Activated naive CD4-positive, alpha-beta T cell treated with anti-CD3 and anti-CD28 coated beads for 36 hours (primary cell): ENCODE measurements at regions of chr12 and their contacts with region 1.

Region 1: GRCh38 chr12:102958073-102958829 is 777 bp downstream of the ASCL1 start:
- DNase-seq: no peak
- H3K4me3 Mint-ChIP-seq: peak overlapping the region; percentile 66
- H3K27ac Mint-ChIP-seq: no peak overlapping the region
- H3K4me1 Mint-ChIP-seq: peaks cover 43% of the 10 kb centered on the region
- H3K27me3 Mint-ChIP-seq: peaks cover 83% of the 10 kb centered on the region

Region 2: GRCh38 chr12:103441437-103442181 is 483.4 kb after region 1 on chr12:
- CTCF ChIA-PET with region 1: no interaction called
- intact Hi-C with region 1: loop called (anchors 5 kb)
- DNase-seq: peak; percentile 51
- H3K4me3 Mint-ChIP-seq: peak overlapping the region; percentile 46
- H3K27ac Mint-ChIP-seq: peak overlapping the region; percentile 77
- H3K4me1 Mint-ChIP-seq: peaks cover 17% of the 10 kb centered on the region
- H3K27me3 Mint-ChIP-seq: no peaks in the 10 kb centered on the region